ENCODE measurements at regions of chr19 and their contacts with region 1.

Region 1: DNA sequence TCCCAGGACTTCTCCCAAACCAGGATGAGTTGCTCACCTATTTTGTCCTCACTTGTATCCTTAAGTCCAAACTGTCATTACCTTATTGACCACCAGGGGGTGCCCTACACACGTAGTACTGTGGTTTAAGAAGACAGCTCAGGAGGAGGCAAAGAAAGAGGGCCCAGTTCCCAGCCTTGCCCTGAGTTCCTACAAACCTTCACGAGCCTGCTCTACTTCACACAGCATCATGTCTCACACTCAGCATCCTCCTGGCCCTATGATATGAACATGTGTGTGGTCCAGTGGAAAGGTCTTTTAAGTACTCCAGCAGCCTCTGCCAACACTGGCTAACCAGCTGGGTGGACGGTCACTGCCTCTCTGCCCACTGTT is 8.1 kb upstream of the ZNF784 start:
- DNase-seq: peak; percentile 84
- H3K4me3 ChIP-seq: no peak overlapping the region
- H3K27ac ChIP-seq: no peak overlapping the region
- H3K4me1 ChIP-seq: peaks cover 14% of the 10 kb centered on the region
- H3K27me3 ChIP-seq: no peaks in the 10 kb centered on the region
- CTCF ChIP-seq: peak; percentile 77 to 79

Region 2: GRCh38 chr19:55516878-55517620 is 115.4 kb before region 1 on chr19:
- CTCF ChIA-PET with region 1: interaction called, 5 read pairs
- dilution Hi-C with region 1: no loop called
- in situ Hi-C with region 1: loop called (anchors 5 kb)
- intact Hi-C with region 1: loop called (anchors 1 kb)
- DNase-seq: peak; percentile 82
- H3K4me3 ChIP-seq: peak overlapping the region; percentile 25 to 58 (median 27)
- H3K27ac ChIP-seq: no peak overlapping the region
- H3K4me1 ChIP-seq: no peaks in the 10 kb centered on the region
- H3K27me3 ChIP-seq: no peaks in the 10 kb centered on the region
- CTCF ChIP-seq: peak; percentile 63 to 97

Region 3: GRCh38 chr19:55586976-55587668 is 45.3 kb before region 1 on chr19:
- CTCF ChIA-PET with region 1: no interaction called
- dilution Hi-C with region 1: no loop called
- in situ Hi-C with region 1: no loop called
- intact Hi-C with region 1: no loop called
- DNase-seq: peak; percentile 95
- H3K4me3 ChIP-seq: peak overlapping the region; percentile 43 to 54 (median 44)
- H3K27ac ChIP-seq: peak overlapping the region; percentile 7
- H3K4me1 ChIP-seq: peaks cover 14% of the 10 kb centered on the region
- H3K27me3 ChIP-seq: no peaks in the 10 kb centered on the region
- CTCF ChIP-seq: no peak

Region 4: GRCh38 chr19:55643348-55644176 is 11.1 kb after region 1 on chr19 and contains the start of gene ZNF581:
- CTCF ChIA-PET with region 1: interaction called, 7 read pairs
- dilution Hi-C with region 1: no loop called
- in situ Hi-C with region 1: no loop called
- intact Hi-C with region 1: loop called (anchors 1 kb)
- DNase-seq: peak; percentile 78
- H3K4me3 ChIP-seq: peak within 1 kb of the TSS; percentile 81 to 86 (median 86)
- H3K27ac ChIP-seq: peak within 1 kb of the TSS; percentile 33
- H3K4me1 ChIP-seq: peaks cover 48% of the 10 kb centered on the region
- H3K27me3 ChIP-seq: no peaks in the 10 kb centered on the region
- CTCF ChIP-seq: no peak
- total RNA-seq, gene ZNF581: 19.8 to 30.4 TPM

Region 5: DNA sequence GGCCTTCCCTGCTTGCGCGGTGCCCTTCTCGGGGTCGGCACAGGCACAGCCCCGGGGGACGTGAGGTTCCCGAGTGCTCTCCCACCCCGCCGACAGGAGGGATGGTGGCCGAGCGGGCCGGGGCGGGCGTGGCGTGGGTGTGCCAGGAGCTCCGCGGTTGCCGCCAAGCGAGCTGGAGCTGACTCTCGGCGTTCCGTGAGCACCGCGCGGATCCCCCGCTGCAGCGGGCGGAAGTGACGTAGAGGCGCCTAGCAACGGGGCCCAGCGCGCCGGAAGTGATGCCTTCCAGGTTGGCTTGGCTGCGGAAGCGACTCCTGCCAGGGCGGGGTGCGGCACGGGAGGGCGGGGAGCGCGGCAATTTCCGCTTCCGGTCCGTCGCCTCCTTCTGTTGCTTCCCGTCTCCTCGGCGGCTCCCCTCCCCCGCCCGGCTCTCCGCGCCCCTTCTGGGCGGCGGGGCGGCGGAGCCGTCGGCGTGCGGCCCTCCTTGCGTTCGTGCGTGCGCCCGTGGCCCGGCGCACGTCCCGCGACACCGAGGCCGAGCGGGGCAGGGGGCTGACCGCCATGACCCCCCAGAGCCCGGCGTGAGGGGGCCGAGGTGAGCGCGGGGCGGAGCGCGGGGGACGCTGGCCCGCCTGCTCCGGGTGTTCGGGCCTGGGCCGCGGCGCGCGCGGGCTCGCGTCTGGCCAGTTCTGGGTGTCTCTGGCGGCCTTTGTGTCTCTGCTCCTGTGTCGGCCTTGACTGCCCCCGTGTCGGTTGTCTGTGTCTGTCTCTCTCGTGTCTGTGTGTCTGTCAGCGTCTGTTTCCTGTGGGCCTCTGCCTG is 42.6 kb after region 1 on chr19 and contains the start of gene EPN1:
- CTCF ChIA-PET with region 1: no interaction called
- dilution Hi-C with region 1: no loop called
- in situ Hi-C with region 1: no loop called
- intact Hi-C with region 1: loop called (anchors 1 kb)
- DNase-seq: peak; percentile 95
- H3K4me3 ChIP-seq: peak within 1 kb of the TSS; percentile 77 to 87 (median 78)
- H3K27ac ChIP-seq: peak within 1 kb of the TSS; percentile 69
- H3K4me1 ChIP-seq: peaks cover 31% of the 10 kb centered on the region
- H3K27me3 ChIP-seq: no peaks in the 10 kb centered on the region
- CTCF ChIP-seq: no peak
- total RNA-seq, gene EPN1: 47.0 to 135 TPM

Region 6: DNA sequence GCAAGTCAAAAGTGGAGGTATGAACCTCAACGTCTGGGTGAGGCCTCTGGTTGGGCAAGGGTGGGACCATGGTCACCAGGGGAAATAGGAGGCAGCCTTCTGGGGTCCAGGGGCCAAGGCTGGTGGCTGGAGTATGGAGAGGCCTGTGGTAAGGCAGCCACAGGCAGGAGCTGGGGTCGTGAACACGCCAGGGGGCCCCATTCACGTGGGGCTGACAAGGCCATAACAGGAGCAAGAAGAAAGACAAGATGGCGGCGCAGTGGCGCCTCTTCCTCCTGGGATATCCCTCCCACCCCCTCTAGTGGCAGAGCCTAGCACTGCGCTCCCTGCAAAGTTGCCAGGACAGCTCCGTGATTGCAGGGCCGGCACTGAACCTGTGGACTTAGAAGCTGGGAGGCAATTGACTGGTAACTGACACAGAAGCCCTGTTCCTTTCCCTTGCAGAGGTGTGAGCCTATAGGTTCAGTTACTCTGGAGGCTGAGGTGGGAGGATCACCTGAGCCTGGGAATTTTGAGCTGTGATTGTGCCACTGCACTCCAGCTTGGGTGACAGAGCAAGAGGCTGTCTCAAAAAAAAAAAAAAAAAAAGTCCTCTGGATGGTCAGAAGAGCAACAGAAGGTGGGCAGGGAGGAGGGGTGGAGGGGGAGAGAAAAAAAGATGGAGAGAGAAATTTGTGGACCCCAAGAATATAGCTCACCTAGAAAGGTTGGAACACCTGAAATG is 620.4 kb after region 1 on chr19:
- CTCF ChIA-PET with region 1: no interaction called
- dilution Hi-C with region 1: no loop called
- in situ Hi-C with region 1: no loop called
- intact Hi-C with region 1: loop called (anchors 5 kb)
- DNase-seq: peak; percentile 65
- H3K4me3 ChIP-seq: no peak overlapping the region
- H3K27ac ChIP-seq: no peak overlapping the region
- H3K4me1 ChIP-seq: no peaks in the 10 kb centered on the region
- H3K27me3 ChIP-seq: no peaks in the 10 kb centered on the region
- CTCF ChIP-seq: peak; percentile 96 to 97